ENCODE measurements at regions of chr5 and their contacts with region 1.

Region 1: GRCh38 chr5:61534481-61535267 is 202.6 kb downstream of the ZSWIM6 start:
- DNase-seq: peak; percentile 69
- H3K4me3 Mint-ChIP-seq: no peak overlapping the region
- H3K27ac Mint-ChIP-seq: peak overlapping the region; percentile 42
- H3K4me1 Mint-ChIP-seq: peaks cover 11% of the 10 kb centered on the region
- H3K27me3 Mint-ChIP-seq: no peaks in the 10 kb centered on the region

Region 2: GRCh38 chr5:61501971-61502370 is 32.7 kb before region 1 on chr5:
- intact Hi-C with region 1: loop called (anchors 1 kb)
- DNase-seq: no peak
- H3K4me3 Mint-ChIP-seq: no peak overlapping the region
- H3K27ac Mint-ChIP-seq: no peak overlapping the region
- H3K4me1 Mint-ChIP-seq: no peaks in the 10 kb centered on the region
- H3K27me3 Mint-ChIP-seq: no peaks in the 10 kb centered on the region

Region 3: GRCh38 chr5:61563401-61563800 is 28.7 kb after region 1 on chr5:
- intact Hi-C with region 1: no loop called
- DNase-seq: no peak
- H3K4me3 Mint-ChIP-seq: no peak overlapping the region
- H3K27ac Mint-ChIP-seq: no peak overlapping the region
- H3K4me1 Mint-ChIP-seq: no peaks in the 10 kb centered on the region
- H3K27me3 Mint-ChIP-seq: no peaks in the 10 kb centered on the region

Region 4: DNA sequence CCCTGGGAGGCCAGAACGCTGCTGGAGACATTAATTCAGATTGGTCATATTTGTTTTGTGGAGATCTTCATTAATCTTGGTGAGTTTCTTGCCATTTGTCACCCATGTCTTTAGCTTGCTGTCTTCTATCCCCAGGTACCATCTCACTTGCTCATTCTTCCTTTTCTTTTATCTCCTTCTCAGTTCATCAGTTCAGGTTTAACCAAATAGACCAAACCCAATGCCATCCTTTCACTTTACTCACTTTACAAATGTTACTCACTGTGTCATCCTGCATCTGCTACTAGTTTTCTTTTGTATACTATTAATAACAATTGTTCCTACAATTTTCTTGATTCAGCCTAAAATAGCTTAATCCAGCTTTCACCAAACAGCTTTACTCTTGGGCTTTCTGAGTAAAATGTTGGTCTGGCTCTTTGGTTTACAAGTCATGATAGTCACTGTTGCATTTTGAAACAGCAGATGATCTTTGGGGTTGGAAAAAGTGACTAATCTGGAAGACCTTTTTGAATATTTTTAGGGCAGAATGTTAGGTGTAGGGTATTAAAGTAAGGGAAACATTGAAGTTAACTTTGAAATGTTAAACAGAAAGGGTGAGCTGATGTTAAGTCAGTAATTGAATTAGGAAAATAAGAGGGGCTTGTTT is 44.3 kb after region 1 on chr5:
- intact Hi-C with region 1: loop called (anchors 1 kb)
- DNase-seq: no peak
- H3K4me3 Mint-ChIP-seq: no peak overlapping the region
- H3K27ac Mint-ChIP-seq: no peak overlapping the region
- H3K4me1 Mint-ChIP-seq: peaks cover 4% of the 10 kb centered on the region
- H3K27me3 Mint-ChIP-seq: no peaks in the 10 kb centered on the region

Region 5: GRCh38 chr5:61625681-61626621 is 91.3 kb after region 1 on chr5:
- intact Hi-C with region 1: loop called (anchors 10 kb)
- DNase-seq: peak; percentile 62
- H3K4me3 Mint-ChIP-seq: no peak overlapping the region
- H3K27ac Mint-ChIP-seq: no peak overlapping the region
- H3K4me1 Mint-ChIP-seq: no peaks in the 10 kb centered on the region
- H3K27me3 Mint-ChIP-seq: peaks cover 42% of the 10 kb centered on the region

Measured in activated CD4-positive, alpha-beta T cell treated with anti-CD3 and anti-CD28 coated beads, Interleukin-2, amount 10 ng/mL, durations not matched to agents 24 days and 14 days (primary cell).